HepG2 (cell line): ENCODE measurements at regions of chr16 and their contacts with region 1.

Region 1: DNA sequence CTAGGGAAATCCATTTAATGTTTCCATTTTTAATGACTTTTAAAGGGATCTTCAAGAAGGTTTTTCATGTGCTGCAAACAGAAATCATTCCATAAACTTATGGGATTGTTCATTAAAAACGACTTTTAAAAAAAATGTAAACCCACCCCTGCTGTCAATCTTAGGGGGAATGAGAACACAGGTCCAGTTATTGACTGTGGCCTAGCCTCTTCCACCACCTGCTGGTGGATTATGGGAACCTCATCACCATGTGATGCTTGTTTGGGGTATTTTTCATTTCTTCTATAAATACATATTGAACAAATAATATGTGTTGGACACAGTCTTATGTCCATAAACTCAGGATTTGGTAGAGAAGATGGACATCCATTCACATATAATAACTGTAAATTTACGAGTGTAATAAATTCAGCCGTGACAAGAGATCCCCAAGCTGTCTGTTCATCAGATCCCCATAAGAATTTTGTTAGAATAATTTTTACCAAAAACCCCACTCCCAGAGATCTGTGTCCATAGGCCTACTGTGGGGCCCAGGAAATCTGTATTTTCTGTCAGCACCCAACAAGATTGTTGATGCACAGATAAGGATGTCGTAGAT is 42.0 kb upstream of the TMC5 start:
- DNase-seq: peak; percentile 60
- ATAC-seq: peak; percentile 83
- H3K4me3 ChIP-seq: no peak overlapping the region
- H3K27ac ChIP-seq: no peak overlapping the region
- H3K4me1 ChIP-seq: peaks cover 13% of the 10 kb centered on the region
- H3K27me3 ChIP-seq: 0 out of 5 replicates have a peak, but pooled peaks cover 1 to 4% of the 10 kb centered on the region in 2 experiments
- CTCF ChIP-seq: peak; percentile 92
- EP300 ChIP-seq: no peak
- POLR2A ChIP-seq: no peak
- RAD21 ChIP-seq: peak; percentile 90

Region 2: DNA sequence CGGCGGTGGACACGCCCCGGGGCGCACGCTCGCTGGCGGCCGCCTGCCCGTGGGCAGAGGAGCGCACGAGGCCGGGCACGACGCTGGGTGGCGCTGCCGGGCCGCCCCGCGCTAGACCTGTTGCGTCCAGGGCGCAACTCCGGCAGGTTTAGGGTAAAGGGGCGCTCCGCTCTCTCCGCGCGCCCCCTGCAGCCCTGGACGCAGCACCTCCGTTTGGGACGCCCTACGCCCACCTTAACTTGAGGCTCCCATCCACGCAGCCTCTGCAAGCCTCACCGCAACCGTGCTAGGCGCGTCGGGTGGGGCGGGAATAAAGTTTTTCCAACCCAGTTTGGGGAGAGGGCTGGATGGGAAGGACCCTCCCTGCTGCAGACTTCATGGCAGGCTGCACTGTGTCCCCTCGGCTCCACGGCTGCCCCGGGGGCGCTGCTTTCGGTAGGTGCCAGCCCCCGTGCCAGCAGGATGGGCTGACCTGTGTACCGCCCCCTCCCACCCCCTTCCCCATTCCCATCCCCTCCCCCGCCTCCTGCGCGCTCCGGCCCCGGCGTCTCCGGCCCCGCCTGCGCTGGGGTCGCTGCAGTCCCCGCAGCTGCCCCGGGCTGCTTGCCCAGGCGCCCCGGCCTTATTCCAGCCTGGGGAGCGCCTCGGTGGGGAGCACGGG is 207.8 kb before region 1 on chr16 and contains the start of gene SYT17:
- CTCF ChIA-PET with region 1: interaction called, 12 read pairs
- POLR2A ChIA-PET with region 1: no interaction called
- in situ Hi-C with region 1: no loop called
- intact Hi-C with region 1: loop called (anchors 5 kb)
- DNase-seq: peak; percentile 60
- ATAC-seq: peak; percentile 94
- H3K4me3 ChIP-seq: peak within 1 kb of the TSS; percentile 25 to 65 (median 41); a peak in 4 of 6 replicates
- H3K27ac ChIP-seq: no peak within 1 kb of the TSS
- H3K4me1 ChIP-seq: no peaks in the 10 kb centered on the region
- H3K27me3 ChIP-seq: peaks cover 11 to 57% of the 10 kb centered on the region in 2 experiments; a peak in 4 of 5 replicates
- CTCF ChIP-seq: peak; percentile 82
- EP300 ChIP-seq: no peak
- POLR2A ChIP-seq: no peak
- RAD21 ChIP-seq: peak; percentile 97
- total RNA-seq, gene SYT17: 0.14 TPM in 1 of 2 replicates, not detected in the other

Region 3: DNA sequence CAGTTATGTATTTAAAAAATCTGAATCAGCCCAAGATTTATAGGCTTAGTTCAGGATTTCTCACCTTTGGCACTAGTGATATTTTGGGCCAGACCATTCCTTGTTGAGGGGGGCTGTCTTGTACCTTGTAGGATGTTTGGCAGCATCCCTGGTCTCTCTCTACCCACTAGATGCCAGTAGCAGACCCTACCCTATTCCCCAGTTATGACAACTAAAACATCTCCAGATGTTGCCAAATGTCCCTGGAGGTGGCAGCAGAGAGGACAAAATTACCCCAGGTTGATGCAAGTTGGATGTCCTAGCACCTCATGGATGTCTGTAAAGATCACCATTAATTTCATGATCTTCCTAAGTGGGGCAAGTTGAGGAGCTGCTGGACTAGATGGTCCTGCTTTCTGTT is 161.8 kb before region 1 on chr16:
- CTCF ChIA-PET with region 1: interaction called, 5 read pairs
- POLR2A ChIA-PET with region 1: no interaction called
- in situ Hi-C with region 1: no loop called
- intact Hi-C with region 1: loop called (anchors 2 kb)
- DNase-seq: peak; percentile 47
- ATAC-seq: peak; percentile 80
- H3K4me3 ChIP-seq: no peak overlapping the region
- H3K27ac ChIP-seq: no peak overlapping the region
- H3K4me1 ChIP-seq: no peaks in the 10 kb centered on the region
- H3K27me3 ChIP-seq: peaks cover 5 to 25% of the 10 kb centered on the region in 2 experiments; a peak in 4 of 5 replicates
- CTCF ChIP-seq: peak; percentile 51
- EP300 ChIP-seq: no peak
- POLR2A ChIP-seq: no peak
- RAD21 ChIP-seq: 0 out of 2 replicates have a peak, but pooled peaks have one; percentile 19

Region 4: DNA sequence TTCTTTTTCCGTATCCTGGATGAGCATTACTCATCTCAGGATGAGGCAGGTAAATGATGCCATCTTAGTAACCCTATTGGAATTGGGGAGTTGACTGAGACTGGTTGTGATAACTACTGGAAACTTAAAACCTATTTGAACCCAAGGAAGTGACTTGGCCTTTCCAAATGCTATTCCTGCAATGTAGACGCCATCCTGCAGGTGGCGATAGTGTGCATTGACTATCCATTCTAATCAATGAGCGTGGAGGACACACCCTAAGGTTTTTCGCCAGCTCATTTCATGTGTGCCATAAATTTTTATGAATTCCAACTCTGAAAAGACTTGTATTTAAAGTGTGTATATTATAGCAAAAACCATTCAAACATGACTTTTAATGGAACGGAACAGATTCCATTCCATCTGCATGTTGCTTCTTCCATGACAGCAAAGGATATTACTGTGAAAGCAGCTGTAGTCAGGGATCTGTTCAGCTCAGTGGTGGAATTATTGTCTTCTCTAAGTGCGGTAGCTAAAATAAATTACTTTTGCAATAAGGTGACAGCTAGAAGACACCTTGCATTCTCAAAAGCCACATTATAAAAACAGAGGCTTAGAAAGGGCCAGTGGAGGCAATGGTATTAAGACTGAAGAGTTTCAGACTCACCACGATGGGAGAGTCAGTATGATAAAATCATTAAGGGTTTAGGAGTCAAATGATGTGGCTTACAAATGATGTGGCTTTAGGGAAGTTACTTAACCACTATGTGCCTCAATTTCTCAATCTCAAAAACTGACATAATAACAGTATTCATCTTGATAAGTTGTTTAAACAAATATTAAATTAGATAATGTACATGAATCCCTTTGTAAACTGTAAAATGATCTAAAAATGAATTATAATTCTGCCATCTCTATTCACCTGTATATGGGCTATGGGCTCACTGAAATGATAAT is 152.2 kb before region 1 on chr16:
- CTCF ChIA-PET with region 1: interaction called, 17 read pairs
- POLR2A ChIA-PET with region 1: no interaction called
- in situ Hi-C with region 1: loop called (anchors 5 kb)
- intact Hi-C with region 1: no loop called
- DNase-seq: peak; percentile 58
- ATAC-seq: no peak
- H3K4me3 ChIP-seq: no peak overlapping the region
- H3K27ac ChIP-seq: no peak overlapping the region
- H3K4me1 ChIP-seq: no peaks in the 10 kb centered on the region
- H3K27me3 ChIP-seq: peaks cover 0 to 11% of the 10 kb centered on the region in 2 experiments; a peak in 1 of 5 replicates
- CTCF ChIP-seq: peak; percentile 81
- EP300 ChIP-seq: no peak
- POLR2A ChIP-seq: no peak
- RAD21 ChIP-seq: peak; percentile 47; the same call in 1 of the 2 replicates

Region 5: DNA sequence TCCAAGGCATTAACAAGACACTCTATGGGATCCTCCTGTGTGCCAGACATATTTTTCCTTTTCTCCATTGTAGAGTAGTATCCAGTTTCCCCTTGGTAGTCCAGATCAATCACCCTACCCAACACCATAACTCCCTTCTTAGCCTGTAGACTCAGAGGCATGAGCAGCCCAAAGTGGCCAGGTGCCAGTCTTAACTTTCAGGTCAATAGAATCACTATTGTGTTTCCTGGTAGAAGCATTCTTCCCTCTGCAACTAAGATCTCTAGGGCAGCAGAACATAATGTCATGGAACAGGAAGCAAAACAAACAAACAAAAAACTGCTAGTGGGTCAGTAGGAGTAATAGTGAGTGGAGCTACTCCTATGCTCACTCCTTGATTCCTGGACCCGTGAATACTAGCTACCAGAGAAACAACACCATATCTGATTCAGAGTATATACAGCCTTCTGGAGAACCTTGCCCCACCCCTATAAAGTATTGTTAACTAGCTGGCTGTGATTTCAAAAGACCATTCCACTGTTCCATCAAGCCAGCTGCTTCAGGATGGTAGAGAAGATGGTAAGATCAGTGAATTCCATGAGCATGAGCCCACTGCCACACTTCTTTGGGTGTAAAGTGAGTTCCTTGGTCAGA is 101.4 kb before region 1 on chr16:
- CTCF ChIA-PET with region 1: no interaction called
- POLR2A ChIA-PET with region 1: no interaction called
- in situ Hi-C with region 1: no loop called
- intact Hi-C with region 1: no loop called
- DNase-seq: no peak
- ATAC-seq: no peak
- H3K4me3 ChIP-seq: no peak overlapping the region
- H3K27ac ChIP-seq: no peak overlapping the region
- H3K4me1 ChIP-seq: no peaks in the 10 kb centered on the region
- H3K27me3 ChIP-seq: no peaks in the 10 kb centered on the region
- CTCF ChIP-seq: no peak
- EP300 ChIP-seq: no peak
- POLR2A ChIP-seq: no peak
- RAD21 ChIP-seq: no peak